ENCODE measurements at regions of chr17 and their contacts with region 1.

Region 1: DNA sequence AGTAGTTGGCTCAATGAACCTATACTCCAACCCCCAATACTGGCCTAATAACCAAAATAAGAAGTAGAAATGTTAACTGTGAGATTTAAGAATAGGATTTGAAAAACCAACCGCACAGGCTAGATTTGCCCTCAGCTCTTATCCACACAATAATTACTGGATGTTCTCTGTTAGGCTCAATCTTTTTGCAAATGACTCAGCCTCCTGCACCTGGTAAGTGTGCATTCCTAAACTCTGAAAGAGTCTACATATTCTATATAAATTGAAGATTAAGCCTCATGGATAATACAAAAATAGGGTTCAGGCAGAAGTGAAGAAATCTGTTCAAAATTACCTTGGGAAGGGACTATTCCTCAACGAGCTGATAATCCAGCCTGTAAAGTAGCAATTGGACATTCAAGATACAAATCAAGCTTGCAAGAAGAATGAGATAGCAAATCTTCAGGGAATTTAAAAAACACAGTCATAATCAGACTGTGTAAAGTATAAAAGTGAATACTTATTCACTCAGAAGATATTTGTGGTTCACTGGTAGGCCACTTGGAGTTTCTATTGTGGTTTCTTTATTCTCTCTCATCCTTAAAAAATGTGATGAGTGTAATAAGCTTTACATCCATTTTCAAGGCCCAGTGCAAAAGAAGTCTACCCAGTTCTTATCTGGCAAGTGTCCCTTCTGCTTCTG is 931.9 kb upstream of the SOX9 start:
- DNase-seq: peak; percentile 46
- H3K4me3 Mint-ChIP-seq: no peak overlapping the region
- H3K27ac Mint-ChIP-seq: peak overlapping the region; percentile 25
- H3K4me1 Mint-ChIP-seq: peaks cover 30% of the 10 kb centered on the region
- H3K27me3 Mint-ChIP-seq: no peaks in the 10 kb centered on the region
- CTCF ChIP-seq: no peak

Region 2: DNA sequence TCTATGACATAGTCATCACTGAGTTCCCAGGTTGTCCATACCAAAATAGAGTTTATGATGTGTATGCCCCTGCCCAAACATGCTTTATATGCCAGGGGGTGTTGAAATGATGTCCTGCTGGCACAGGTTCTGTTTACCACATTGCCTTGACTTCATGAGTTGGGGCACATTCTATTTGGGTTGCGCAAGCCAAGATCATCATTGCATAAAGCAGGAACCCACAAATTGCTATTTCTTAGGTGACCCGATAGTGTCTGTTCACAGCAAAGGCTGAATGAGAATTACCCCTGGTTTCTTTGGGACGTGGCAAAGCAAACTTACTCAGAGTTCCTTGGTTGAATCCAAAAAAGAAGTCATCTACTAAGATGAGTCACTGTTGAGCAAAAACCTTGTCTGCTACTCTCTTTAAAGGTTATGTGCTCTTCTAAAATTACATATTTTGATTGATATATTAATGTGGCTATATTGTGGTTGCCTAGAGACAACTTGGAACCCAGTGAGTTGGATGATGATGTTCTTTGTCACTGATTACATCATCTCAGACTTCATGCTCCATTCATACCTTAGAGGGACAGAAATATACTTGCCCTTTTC is 19.3 kb after region 1 on chr17:
- CTCF ChIA-PET with region 1: no interaction called
- POLR2A ChIA-PET with region 1: no interaction called
- intact Hi-C with region 1: loop called (anchors 2 kb)
- DNase-seq: peak; percentile 91
- H3K4me3 Mint-ChIP-seq: no peak overlapping the region
- H3K27ac Mint-ChIP-seq: peak overlapping the region; percentile 95
- H3K4me1 Mint-ChIP-seq: peaks cover 13% of the 10 kb centered on the region
- H3K27me3 Mint-ChIP-seq: no peaks in the 10 kb centered on the region
- CTCF ChIP-seq: no peak

Region 3: GRCh38 chr17:71224824-71225575 is 36.0 kb after region 1 on chr17:
- CTCF ChIA-PET with region 1: no interaction called
- POLR2A ChIA-PET with region 1: no interaction called
- intact Hi-C with region 1: no loop called
- DNase-seq: peak; percentile 13
- H3K4me3 Mint-ChIP-seq: no peak overlapping the region
- H3K27ac Mint-ChIP-seq: no peak overlapping the region
- H3K4me1 Mint-ChIP-seq: no peaks in the 10 kb centered on the region
- H3K27me3 Mint-ChIP-seq: no peaks in the 10 kb centered on the region
- CTCF ChIP-seq: no peak